ENCODE measurements at regions of chr5 and their contacts with region 1.

Region 1: DNA sequence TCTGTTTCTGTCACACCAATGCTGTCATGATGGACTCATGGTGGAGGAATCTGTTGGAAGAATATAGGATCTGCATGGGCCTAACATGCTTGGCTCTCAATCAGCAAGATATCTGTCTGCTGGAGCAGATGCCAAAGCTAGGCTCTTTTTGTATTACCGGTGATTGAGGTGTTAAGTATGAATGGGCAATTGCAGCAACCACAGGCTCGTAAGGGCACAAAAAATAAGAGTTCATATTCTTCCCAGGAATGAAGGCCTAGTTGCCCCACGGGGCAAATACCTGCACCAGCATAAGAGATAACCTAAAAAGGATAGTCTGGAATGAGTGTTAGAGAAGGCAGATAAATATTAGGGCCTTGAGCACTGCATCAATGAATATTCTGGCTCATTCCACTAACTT is 679.5 kb upstream of the COX7C start:
- DNase-seq: no peak
- ATAC-seq: no peak
- H3K4me3 ChIP-seq: no peak overlapping the region
- H3K27ac ChIP-seq: no peak overlapping the region
- H3K4me1 ChIP-seq: no peaks in the 10 kb centered on the region
- H3K27me3 ChIP-seq: no peaks in the 10 kb centered on the region
- CTCF ChIP-seq: no peak

Region 2: DNA sequence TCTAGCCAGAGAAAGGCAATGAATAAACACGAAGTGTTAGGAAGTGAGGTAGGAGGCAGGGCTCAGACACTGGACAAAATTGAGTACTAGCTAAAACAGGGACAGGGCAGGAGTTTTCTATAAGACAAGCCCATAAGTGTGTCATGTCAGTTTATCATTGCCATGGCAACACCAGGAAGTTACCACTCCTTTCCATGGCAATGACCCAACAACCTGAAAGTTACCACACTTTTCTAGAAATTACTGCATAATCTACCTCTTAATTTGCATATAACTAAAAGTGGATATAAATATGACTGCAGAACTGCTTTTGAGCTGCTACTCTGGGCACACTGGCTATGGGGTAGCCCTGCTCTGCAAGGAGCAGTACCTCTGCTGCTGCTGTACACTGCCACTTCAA is 237.0 kb after region 1 on chr5:
- CTCF ChIA-PET with region 1: no interaction called
- POLR2A ChIA-PET with region 1: no interaction called
- intact Hi-C with region 1: loop called (anchors 10 kb)
- DNase-seq: peak; percentile 34
- ATAC-seq: no peak; the same call in 1 of the 2 replicates
- H3K4me3 ChIP-seq: no peak overlapping the region
- H3K27ac ChIP-seq: no peak overlapping the region
- H3K4me1 ChIP-seq: no peaks in the 10 kb centered on the region
- H3K27me3 ChIP-seq: no peaks in the 10 kb centered on the region
- CTCF ChIP-seq: no peak

Region 3: DNA sequence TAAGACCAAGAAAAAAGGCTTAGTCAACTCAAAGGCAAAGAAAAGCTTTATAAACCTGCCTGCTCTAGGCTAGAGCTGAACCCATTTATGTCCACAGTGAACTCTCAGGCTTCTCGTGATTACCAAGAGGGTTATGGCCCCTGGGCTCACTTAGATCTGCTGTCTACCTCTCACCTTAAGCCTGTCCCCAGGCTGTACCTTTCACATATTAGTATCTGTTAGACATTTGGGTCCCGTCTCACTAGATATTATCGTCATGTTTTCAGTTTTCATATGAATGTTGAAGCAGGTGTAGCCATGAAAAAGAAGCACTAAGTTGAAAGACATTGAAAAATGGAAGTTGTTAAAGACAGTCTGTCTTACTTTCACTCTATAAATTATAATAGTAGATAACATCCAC is 604.3 kb after region 1 on chr5:
- CTCF ChIA-PET with region 1: no interaction called
- POLR2A ChIA-PET with region 1: no interaction called
- intact Hi-C with region 1: no loop called
- DNase-seq: no peak
- ATAC-seq: no peak
- H3K4me3 ChIP-seq: no peak overlapping the region
- H3K27ac ChIP-seq: no peak overlapping the region
- H3K4me1 ChIP-seq: no peaks in the 10 kb centered on the region
- H3K27me3 ChIP-seq: no peaks in the 10 kb centered on the region
- CTCF ChIP-seq: no peak

Measured in PC-3 (cell line).